ENCODE measurements at regions of chr6 and their contacts with region 1.

Region 1: DNA sequence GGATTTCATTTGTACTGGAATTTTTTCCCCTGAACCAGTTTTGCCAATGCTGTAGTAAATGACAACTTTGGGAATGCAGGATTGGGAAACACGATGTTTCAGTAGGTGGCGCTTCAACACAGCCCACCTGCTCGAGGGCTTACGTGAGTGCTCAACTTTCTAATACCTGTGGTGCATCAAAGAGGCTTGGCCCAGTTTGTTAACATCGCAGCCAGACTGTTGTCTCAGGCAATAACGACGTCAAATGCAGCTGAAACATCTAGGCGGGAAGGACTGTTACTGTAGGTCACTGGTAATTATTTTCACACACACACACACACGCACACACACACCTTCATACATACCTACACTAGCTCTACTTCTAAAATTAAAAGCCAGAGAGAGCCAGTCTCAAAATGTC is 815.5 kb upstream of the SLC35B3 start:
- DNase-seq: no peak
- ATAC-seq: peak; percentile 59

Region 2: GRCh38 chr6:9412951-9413559 is 162.2 kb after region 1 on chr6:
- intact Hi-C with region 1: loop called (anchors 5 kb)
- DNase-seq: peak; percentile 32
- ATAC-seq: peak; percentile 63